ENCODE measurements at regions of chr17 and their contacts with region 1.

Region 1: GRCh38 chr17:7931709-7932482 is at the starts of genes CNTROB and TRAPPC1:
- DNase-seq: peak; percentile 99 to 100
- H3K4me3 ChIP-seq: peak within 1 kb of the TSS; percentile 78
- H3K4me1 ChIP-seq: peaks cover 13% of the 10 kb centered on the region
- H3K27me3 ChIP-seq: no peaks in the 10 kb centered on the region

Region 2: GRCh38 chr17:7989781-7990655 is 58.1 kb after region 1 on chr17:
- in situ Hi-C with region 1: loop called (anchors 5 kb)
- DNase-seq: peak; percentile 68 to 95
- H3K4me3 ChIP-seq: peak overlapping the region; percentile 38
- H3K4me1 ChIP-seq: peaks cover 16% of the 10 kb centered on the region
- H3K27me3 ChIP-seq: no peaks in the 10 kb centered on the region

Region 3: GRCh38 chr17:8151123-8151640 is 219.3 kb after region 1 on chr17:
- in situ Hi-C with region 1: no loop called
- DNase-seq: peak in 1 of 2 experiments; percentile 84
- H3K4me3 ChIP-seq: peak overlapping the region; percentile 59
- H3K4me1 ChIP-seq: peaks cover 42% of the 10 kb centered on the region
- H3K27me3 ChIP-seq: no peaks in the 10 kb centered on the region

Measured in HAP-1 (cell line).